PC-9 (cell line): ENCODE measurements at regions of chr3 and their contacts with region 1.

Region 1: DNA sequence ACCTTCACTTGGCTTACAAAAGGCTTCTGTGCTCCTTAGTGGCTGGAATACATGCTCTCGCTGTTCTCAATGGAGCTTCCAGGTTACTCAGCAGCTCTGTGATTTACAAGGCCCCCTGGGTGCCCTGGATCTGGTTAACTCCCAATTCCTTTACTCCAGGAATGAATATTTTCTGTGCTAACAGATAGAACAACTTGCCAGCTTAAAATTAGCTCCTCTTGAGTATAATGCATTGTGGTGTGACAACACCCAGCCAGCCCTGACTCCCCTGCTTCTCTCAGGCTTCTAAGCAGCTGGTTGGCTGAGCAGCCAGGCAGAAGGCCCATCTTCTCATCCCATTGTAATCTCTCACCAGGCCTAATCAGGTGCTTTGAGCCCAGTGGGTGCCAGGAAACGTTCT is 246.4 kb downstream of the ALCAM start:
- DNase-seq: no peak
- H3K4me3 ChIP-seq: no peak overlapping the region
- H3K27ac ChIP-seq: no peak overlapping the region
- H3K4me1 ChIP-seq: peaks cover 26% of the 10 kb centered on the region
- H3K27me3 ChIP-seq: no peaks in the 10 kb centered on the region
- CTCF ChIP-seq: no peak

Region 2: DNA sequence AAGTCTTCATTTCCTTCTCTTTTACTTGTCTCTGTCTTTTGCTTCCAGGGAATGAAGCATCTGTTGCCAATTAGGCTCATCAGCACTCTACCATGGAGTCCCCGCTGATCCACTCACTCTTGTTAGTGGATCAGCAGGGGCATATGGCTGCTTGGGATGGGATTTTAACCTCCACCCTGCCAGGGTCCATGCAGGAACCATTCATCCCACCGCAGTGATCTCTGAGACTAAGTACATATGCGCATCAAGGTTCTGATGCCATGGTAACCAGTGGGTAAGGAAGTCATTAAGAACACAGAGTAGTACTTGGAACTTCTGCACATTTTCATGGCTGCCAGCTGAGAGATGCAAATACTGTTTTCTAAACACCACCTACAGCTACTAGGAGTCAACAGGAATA is 620.4 kb before region 1 on chr3:
- CTCF ChIA-PET with region 1: no interaction called
- POLR2A ChIA-PET with region 1: no interaction called
- intact Hi-C with region 1: no loop called
- DNase-seq: no peak
- H3K4me3 ChIP-seq: no peak overlapping the region
- H3K27ac ChIP-seq: no peak overlapping the region
- H3K4me1 ChIP-seq: no peaks in the 10 kb centered on the region
- H3K27me3 ChIP-seq: no peaks in the 10 kb centered on the region
- CTCF ChIP-seq: no peak

Region 3: GRCh38 chr3:105598047-105598796 is 14.9 kb before region 1 on chr3:
- CTCF ChIA-PET with region 1: no interaction called
- POLR2A ChIA-PET with region 1: no interaction called
- intact Hi-C with region 1: loop called (anchors 1 kb)
- DNase-seq: peak; percentile 55 to 96
- H3K4me3 ChIP-seq: 0 out of 2 replicates have a peak overlapping the region, but pooled peaks have one; percentile 2
- H3K27ac ChIP-seq: peak overlapping the region; percentile 49
- H3K4me1 ChIP-seq: peaks cover 16% of the 10 kb centered on the region
- H3K27me3 ChIP-seq: no peaks in the 10 kb centered on the region
- CTCF ChIP-seq: no peak